Adrenal gland (tissue), 19 donors: ENCODE measurements at regions of chr22 and their contacts with region 1.

Region 1: DNA sequence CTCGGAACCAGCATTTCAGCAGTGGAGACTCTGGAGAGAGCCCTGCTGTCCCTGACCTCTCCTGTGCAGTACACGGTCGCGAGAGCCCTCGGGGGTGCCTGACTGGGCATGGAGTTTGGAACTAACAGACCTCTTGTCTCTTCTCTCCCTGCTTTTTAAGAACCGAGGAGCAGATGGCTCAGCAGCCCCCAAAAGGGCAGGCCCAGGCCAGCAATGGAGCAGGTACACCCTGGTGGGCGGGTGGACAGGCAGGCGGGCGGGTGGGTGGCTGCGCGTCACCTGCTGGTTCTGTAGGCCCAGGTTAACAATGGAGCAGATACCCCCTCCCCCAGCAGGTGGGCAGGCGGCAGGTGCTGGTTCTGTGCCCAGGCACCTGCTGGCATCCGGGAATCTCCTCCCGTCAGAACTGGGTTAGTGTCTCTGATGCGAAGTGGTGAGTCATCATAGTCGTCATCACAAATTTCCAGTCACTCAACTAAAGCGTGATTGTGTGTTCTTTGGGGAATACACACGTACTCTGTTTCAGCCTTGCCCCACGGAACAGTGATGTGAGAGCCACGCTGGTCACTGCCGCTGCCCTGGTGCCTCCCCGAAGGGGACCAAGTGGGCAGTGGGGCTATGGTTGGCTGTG is 41.1 kb downstream of the GRAMD4 start:
- DNase-seq: peak; percentile 78 to 90 (median 86)
- H3K4me3 ChIP-seq: no peak overlapping the region
- H3K27ac ChIP-seq: peak overlapping the region; percentile 62 to 97 (median 84)
- H3K4me1 ChIP-seq: peaks cover 8 to 17% of the 10 kb centered on the region in 2 donors
- H3K27me3 ChIP-seq: no peaks in the 10 kb centered on the region
- CTCF ChIP-seq: no peak
- POLR2A ChIP-seq: peak in 1 of 2 donors; percentile 41

Region 2: DNA sequence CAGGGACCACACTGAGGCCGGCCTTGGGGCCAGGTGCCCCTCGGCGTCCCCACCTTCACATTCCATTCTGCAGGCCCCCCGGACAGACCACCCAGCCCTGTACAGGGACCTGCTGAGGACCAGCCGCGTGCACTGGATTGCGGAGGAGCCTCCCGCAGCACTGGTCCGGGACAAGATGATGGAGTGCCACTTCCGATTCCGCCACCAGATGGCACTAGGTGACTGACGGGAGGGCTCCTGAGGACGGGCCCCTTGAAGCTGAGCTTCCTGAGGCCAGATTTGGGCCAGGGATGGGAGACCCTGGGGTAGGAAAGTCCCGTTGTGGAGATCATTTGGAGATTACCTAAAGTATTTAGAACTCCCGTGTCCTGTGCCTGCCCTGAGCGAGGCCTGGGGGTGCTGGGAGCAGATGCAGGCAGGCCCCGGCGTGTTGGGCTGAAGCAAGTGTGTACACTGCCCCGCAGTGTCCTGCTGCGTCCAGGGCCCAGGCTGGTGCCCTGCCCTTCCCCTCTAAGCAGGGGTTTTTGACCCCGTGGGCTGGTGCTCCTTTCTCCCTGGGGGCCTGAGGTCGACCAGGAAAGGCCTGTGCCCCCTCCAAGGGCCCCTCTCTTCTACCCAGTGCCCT is 305.9 kb before region 1 on chr22:
- intact Hi-C with region 1: loop called in 1 of 2 experiments (anchors 10 kb)
- DNase-seq: peak; percentile 55 to 81 (median 66)
- H3K4me3 ChIP-seq: no peak overlapping the region
- H3K27ac ChIP-seq: no peak overlapping the region
- H3K4me1 ChIP-seq: peaks cover 0 to 18% of the 10 kb centered on the region in 2 donors
- H3K27me3 ChIP-seq: no peaks in the 10 kb centered on the region
- CTCF ChIP-seq: peak; percentile 50 to 69 (median 63)
- POLR2A ChIP-seq: no peak

Region 3: GRCh38 chr22:46829941-46830715 is 168.8 kb after region 1 on chr22:
- intact Hi-C with region 1: no loop called
- DNase-seq: peak; percentile 55 to 86 (median 81)
- H3K4me3 ChIP-seq: no peak overlapping the region
- H3K27ac ChIP-seq: peak overlapping the region in 3 of 5 donors; percentile 27 to 70 (median 35)
- H3K4me1 ChIP-seq: peaks cover 20 to 31% of the 10 kb centered on the region in 2 donors
- H3K27me3 ChIP-seq: no peaks in the 10 kb centered on the region
- CTCF ChIP-seq: no peak
- POLR2A ChIP-seq: no peak